Activated T-helper 1 cell treated with anti-CD3 and anti-CD28 coated beads, Interleukin-12 subunit alpha, Interleukin-12 subunit beta, Interleukin-2, Interleukin-4 antibody, amounts not matched to agents 30 ng/mL and 10 ng/mL and 1 ng/mL, durations not matched to agents 14 hours and 24 hours and 36 hours (primary cell): ENCODE measurements at regions of chr6 and their contacts with region 1.

Region 1: DNA sequence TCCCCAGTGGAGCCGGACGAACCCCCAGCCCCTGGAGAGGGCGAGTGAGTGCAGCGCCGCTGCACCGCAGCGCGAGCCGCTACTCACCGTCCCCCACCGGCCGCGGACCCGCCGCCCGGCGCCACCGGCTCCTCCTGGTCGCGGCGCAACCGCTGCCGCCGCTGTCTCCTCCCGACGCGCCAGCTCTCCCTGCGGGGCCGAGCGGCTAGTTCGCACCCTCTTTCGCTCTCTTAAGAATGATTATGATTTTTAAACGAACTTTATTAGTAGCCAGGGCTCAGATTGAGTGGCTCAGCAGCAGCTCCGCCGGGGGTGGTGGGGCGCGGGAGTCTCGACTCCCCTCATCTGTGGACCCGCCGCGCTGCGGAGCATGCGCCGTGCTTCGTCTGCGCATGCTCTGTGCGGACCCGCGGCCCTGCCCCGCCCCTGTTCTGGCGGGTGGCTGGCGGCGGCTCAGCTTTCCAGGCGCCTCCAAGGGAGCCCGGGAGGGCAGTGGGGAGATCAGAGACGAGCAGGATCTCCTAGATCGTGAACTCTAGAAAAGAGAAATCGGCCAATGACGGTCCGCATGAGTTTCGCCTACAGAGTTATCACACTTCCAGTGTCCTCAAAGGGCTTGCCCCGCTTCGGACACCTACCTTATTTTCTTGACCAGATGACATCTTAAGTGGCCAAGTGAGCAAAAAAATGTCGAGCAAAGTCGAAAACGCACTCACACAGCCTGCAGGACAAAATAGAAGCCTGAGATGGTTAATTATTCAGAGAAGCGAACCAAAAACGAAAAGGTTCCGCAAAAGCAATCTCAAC is at the start of gene RAB23:
- DNase-seq: peak; percentile 85
- H3K4me3 Mint-ChIP-seq: peak within 1 kb of the TSS; percentile 94
- H3K27ac Mint-ChIP-seq: peak within 1 kb of the TSS; percentile 94
- H3K4me1 Mint-ChIP-seq: peaks cover 39% of the 10 kb centered on the region
- H3K27me3 Mint-ChIP-seq: peaks cover 30% of the 10 kb centered on the region
- total RNA-seq, gene RAB23: 3.0 and 3.8 TPM in 2 replicates

Region 2: DNA sequence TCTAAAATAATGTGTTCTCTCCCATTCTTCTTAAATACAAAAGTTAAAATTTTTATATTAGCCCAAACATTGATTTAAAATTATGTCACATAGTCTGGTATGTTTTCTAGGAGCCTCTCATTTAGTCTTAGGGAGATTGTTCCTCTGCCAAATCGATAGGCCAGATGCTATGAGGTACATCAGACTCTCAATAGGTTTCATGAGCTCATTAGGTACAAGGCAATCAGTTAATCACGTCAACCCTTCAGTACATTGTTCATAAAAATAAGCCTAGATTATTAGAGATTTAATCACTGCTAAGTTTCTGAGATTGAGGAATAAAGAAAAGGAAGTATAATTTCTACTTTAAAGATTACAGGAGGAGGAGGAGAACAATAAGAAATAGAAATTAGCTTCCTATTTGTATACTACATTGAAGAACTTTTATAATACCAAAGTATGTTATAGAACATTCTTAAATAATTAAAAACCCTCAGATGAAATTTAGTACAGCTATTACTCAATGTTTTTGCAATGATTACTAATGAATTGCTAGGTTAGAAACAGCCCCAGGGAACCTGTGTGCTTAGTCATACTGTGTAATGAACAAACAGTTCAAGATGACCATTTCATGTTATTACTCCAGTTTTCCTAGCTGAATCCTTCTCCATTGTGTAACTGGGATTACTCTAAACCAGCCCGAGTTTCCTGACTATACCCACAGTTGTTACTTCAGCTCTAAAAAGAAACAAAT is 1463.8 kb before region 1 on chr6:
- intact Hi-C with region 1: no loop called
- DNase-seq: no peak
- H3K4me3 Mint-ChIP-seq: no peak overlapping the region
- H3K27ac Mint-ChIP-seq: no peak overlapping the region
- H3K4me1 Mint-ChIP-seq: no peaks in the 10 kb centered on the region
- H3K27me3 Mint-ChIP-seq: no peaks in the 10 kb centered on the region

Region 3: GRCh38 chr6:56542364-56543331 is 679.5 kb before region 1 on chr6:
- intact Hi-C with region 1: loop called (anchors 5 kb)
- DNase-seq: peak; percentile 66
- H3K4me3 Mint-ChIP-seq: no peak overlapping the region
- H3K27ac Mint-ChIP-seq: no peak overlapping the region
- H3K4me1 Mint-ChIP-seq: no peaks in the 10 kb centered on the region
- H3K27me3 Mint-ChIP-seq: peaks cover 11% of the 10 kb centered on the region

Region 4: GRCh38 chr6:56902641-56903464 is 319.3 kb before region 1 on chr6:
- intact Hi-C with region 1: loop called (anchors 5 kb)
- DNase-seq: no peak
- H3K4me3 Mint-ChIP-seq: no peak overlapping the region
- H3K27ac Mint-ChIP-seq: no peak overlapping the region
- H3K4me1 Mint-ChIP-seq: peaks cover 5% of the 10 kb centered on the region
- H3K27me3 Mint-ChIP-seq: peaks cover 15% of the 10 kb centered on the region

Region 5: DNA sequence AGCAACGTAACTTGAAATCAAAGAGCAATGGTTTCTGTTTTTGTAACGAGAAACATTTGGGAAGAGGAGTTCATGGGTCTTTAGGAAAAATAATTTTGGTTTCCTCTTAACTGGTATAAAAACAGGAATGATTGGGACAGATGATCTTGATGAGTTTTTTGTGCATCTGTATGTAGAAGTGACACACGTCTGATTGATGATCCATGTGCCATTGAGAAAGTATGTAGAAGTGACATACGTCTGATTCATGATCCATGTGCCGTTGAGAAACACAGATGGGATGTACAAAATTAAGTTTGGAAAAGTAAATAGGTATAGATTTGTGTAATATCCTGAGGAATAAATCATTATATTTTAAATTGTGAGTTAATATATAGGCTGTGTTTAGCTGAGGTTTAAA is 173.6 kb before region 1 on chr6:
- intact Hi-C with region 1: loop called (anchors 1 kb)
- DNase-seq: no peak
- H3K4me3 Mint-ChIP-seq: peak overlapping the region; percentile 84
- H3K27ac Mint-ChIP-seq: no peak overlapping the region
- H3K4me1 Mint-ChIP-seq: peaks cover 35% of the 10 kb centered on the region
- H3K27me3 Mint-ChIP-seq: peaks cover 23% of the 10 kb centered on the region

Region 6: DNA sequence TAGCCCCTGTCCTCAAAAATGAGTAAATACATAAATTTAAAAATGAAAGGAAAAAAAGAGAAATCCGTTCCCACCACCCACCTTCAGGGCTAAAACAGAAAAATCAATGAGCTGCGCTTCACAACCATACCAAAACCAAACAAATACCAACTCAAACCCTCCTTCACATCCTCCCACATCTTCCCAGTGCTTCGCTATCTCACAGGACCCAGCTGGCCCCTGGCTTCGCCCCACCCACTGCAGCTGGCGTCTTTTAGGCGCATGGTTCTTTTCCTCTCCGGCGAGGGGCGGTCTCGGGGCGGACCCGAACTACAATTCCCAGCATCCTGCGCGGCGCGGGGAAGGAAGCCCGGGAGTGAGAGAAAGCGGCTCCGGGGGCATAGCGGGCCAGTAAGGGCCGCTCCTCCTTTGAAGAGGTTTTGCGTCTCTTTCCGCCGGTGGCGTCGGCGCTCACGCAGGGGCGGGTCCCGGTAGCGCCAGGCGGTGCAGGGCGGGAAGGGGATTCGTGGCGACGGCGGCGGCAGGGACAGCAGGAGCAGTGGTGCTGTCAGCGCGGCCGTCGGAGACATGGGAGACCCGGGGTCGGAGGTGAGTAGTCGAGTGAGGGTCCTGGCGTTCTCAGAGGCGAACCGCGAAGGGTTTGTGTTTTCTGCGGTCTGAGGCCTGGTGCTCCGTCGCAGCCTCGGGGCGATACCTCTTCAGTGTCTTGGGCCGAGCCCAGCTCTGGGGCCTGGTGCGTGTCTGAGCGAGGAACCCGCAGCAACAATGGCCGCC is 132.3 kb before region 1 on chr6 and contains the start of gene ZNF451:
- intact Hi-C with region 1: loop called (anchors 1 kb)
- DNase-seq: peak; percentile 95
- H3K4me3 Mint-ChIP-seq: peak within 1 kb of the TSS; percentile 88
- H3K27ac Mint-ChIP-seq: peak within 1 kb of the TSS; percentile 72
- H3K4me1 Mint-ChIP-seq: peaks cover 35% of the 10 kb centered on the region
- H3K27me3 Mint-ChIP-seq: no peaks in the 10 kb centered on the region
- total RNA-seq, gene ZNF451: 58.1 and 64.4 TPM in 2 replicates

Region 7: GRCh38 chr6:57207141-57207540 is 15.0 kb before region 1 on chr6:
- intact Hi-C with region 1: loop called (anchors 2 kb)
- DNase-seq: no peak
- H3K4me3 Mint-ChIP-seq: no peak overlapping the region
- H3K27ac Mint-ChIP-seq: no peak overlapping the region
- H3K4me1 Mint-ChIP-seq: peaks cover 7% of the 10 kb centered on the region
- H3K27me3 Mint-ChIP-seq: no peaks in the 10 kb centered on the region

Region 8: GRCh38 chr6:57267586-57268293 is 45.6 kb after region 1 on chr6:
- intact Hi-C with region 1: loop called (anchors 2 kb)
- DNase-seq: no peak
- H3K4me3 Mint-ChIP-seq: no peak overlapping the region
- H3K27ac Mint-ChIP-seq: no peak overlapping the region
- H3K4me1 Mint-ChIP-seq: peaks cover 8% of the 10 kb centered on the region
- H3K27me3 Mint-ChIP-seq: peaks cover 2% of the 10 kb centered on the region